Activated naive CD4-positive, alpha-beta T cell treated with anti-CD3 and anti-CD28 coated beads, Interleukin-2, amount 10 ng/mL, durations not matched to agents 7 days and 5 days (primary cell): ENCODE measurements at regions of chr10 and their contacts with region 1.

Region 1: GRCh38 chr10:23158370-23158769 is 33.7 kb upstream of the PTF1A start:
- DNase-seq: peak; percentile 54
- H3K4me3 Mint-ChIP-seq: no peak overlapping the region
- H3K27ac Mint-ChIP-seq: no peak overlapping the region
- H3K4me1 Mint-ChIP-seq: no peaks in the 10 kb centered on the region
- H3K27me3 Mint-ChIP-seq: peaks cover 12% of the 10 kb centered on the region

Region 2: DNA sequence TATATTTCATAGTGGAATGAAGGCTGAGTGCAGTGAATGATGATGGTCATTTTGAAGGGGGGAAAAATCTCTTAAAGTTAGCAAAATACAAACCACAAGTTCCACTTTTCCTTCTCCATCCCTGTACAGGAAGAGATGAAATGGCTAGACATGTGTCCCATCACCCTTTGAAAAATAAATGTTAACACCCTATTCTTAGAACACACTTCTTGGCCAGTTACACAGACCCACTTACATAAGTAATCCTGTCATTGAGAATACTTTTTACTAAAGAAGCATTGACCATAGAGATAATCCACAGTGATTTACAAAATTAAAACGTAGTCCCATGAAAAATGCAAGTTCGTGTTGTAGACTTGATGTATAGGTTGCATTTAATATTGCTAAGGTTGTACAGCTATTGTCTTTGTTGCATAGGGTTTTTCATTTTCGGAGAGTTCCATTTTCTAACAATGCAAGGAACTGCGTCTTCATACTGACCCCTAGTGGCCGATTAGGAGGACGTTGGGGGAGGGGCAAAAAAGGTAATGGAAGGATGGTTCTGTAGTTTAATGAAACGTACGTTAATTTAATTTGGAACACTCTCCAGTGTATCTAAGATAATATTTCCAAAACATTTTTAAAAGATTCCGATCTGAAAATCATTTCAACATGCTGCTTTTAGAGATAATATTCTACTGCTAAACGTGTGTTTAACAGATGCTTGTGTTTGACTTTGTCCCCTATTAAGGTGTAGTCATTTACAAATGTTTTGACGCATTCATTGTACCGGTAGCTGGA is 169.6 kb before region 1 on chr10:
- CTCF ChIA-PET with region 1: no interaction called
- DNase-seq: peak; percentile 75
- H3K4me3 Mint-ChIP-seq: no peak overlapping the region
- H3K27ac Mint-ChIP-seq: no peak overlapping the region
- H3K4me1 Mint-ChIP-seq: peaks cover 19% of the 10 kb centered on the region
- H3K27me3 Mint-ChIP-seq: peaks cover 17% of the 10 kb centered on the region

Region 3: DNA sequence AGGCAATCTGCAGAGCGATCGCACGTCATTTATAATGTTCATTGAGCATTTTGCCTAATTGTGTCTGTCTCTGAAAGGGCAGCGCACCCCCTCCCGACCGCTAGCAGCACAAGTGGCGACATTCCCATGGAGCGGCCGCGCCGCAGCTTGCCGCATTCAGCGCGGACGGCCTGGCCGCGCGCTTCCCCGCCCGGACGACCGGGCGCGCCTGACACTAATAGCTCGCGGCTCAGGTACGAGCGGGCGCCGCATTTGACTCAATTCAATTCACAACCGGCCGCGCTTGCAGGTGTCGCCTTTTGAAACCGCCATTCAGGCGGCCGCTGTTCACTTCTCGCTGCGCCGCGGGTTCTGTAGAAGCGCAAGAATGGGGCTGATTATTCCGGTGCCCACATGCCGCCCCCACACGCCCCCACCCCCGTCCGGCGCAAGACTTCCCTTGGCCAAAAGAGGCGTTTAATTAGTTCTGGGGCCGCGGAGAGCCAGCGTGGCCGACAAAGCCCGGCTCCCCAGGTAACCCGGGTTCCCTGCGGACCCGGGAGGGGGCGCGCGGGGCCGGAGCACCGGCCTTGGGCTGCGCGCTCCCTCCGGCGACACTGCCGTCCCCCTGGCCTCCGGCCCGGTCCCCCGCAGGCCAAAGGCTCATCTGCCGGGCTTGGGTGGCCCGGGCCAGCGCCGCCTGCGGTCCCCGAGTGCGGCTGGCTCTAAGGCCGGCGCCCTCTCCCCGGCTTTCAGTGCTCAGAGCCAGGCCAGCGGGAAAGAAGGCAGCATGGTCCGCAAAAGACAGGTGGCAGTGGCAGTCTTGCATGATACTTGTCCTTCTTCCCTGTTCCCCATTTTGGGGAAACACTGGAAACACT is 15.1 kb after region 1 on chr10:
- CTCF ChIA-PET with region 1: interaction called, 12 read pairs
- DNase-seq: no peak
- H3K4me3 Mint-ChIP-seq: no peak overlapping the region
- H3K27ac Mint-ChIP-seq: no peak overlapping the region
- H3K4me1 Mint-ChIP-seq: no peaks in the 10 kb centered on the region
- H3K27me3 Mint-ChIP-seq: peaks cover 75% of the 10 kb centered on the region

Region 4: DNA sequence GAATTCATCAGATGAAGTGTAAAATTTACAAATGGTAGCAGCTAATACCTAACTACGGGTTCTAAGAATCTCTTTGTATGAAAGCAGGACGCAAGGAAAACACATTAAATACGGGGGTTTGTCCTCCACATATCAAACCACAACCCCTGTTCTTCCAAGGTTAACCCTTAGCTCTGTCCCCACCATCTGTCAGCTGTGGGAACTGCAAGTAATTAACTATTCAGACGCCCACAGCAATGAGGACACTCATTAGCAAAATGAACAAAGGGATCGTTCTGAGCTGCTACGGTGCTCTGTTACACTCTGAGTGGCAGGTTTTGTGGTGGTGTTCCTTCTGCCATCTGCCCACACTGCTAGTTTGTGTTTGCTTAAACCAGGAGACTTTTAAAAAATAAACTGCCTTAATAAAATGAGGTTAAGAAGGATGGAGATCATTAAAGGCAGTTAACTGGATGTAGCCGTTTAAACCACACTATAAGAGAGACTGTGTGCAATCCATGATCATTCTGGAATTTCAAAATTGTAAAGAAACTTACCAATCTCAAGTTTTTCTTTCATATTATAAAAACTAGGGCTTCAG is 134.9 kb after region 1 on chr10:
- CTCF ChIA-PET with region 1: interaction called, 49 read pairs
- DNase-seq: peak; percentile 61
- H3K4me3 Mint-ChIP-seq: no peak overlapping the region
- H3K27ac Mint-ChIP-seq: no peak overlapping the region
- H3K4me1 Mint-ChIP-seq: no peaks in the 10 kb centered on the region
- H3K27me3 Mint-ChIP-seq: peaks cover 23% of the 10 kb centered on the region